ENCODE measurements at regions of chr4 and their contacts with region 1.

Region 1: GRCh38 chr4:112031712-112032328 is 113.4 kb upstream of the FAM241A start:
- DNase-seq: no peak
- H3K4me3 ChIP-seq: no peak overlapping the region
- H3K27ac ChIP-seq: no peak overlapping the region
- H3K4me1 ChIP-seq: peaks cover 0 to 26% (median 6%) of the 10 kb centered on the region in 3 donors
- H3K27me3 ChIP-seq: peaks cover 0 to 11% (median 0%) of the 10 kb centered on the region in 4 donors
- CTCF ChIP-seq: peak; percentile 43 to 86 (median 59)
- POLR2A ChIP-seq: no peak

Region 2: DNA sequence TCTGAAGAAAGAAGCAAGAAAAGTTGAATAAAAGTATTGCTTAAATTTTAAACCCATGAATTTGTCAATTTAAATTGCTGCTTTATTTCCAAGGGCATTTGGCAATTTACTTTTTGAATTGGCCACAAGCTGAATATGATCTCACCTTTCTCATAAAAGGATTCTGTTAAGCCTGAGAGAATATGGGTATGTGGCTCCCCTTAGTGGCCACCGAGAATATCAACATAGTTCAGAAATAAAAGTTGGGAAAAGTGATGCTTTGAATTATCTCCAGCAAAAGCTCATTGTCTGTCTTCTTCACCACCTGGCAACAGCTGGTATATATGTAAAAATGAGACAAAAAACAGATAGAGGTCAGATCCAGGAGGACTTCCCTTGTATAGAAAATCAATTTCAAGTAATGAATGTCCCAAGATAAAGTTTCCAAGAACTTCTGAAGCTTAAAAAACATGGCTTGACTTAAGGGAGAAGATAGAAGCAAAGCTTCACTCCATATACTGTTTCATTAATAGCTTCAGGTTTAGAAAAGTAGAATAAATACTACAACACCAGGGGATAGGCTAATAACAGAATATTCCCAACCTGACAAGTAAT is 177.2 kb before region 1 on chr4:
- intact Hi-C with region 1: no loop called
- DNase-seq: no peak
- H3K4me3 ChIP-seq: no peak overlapping the region
- H3K27ac ChIP-seq: no peak overlapping the region
- H3K4me1 ChIP-seq: no peaks in the 10 kb centered on the region
- H3K27me3 ChIP-seq: no peaks in the 10 kb centered on the region
- CTCF ChIP-seq: peak in 5 of 6 experiments; percentile 21 to 71 (median 46)
- POLR2A ChIP-seq: no peak

Region 3: GRCh38 chr4:111943795-111944203 is 88.0 kb before region 1 on chr4:
- intact Hi-C with region 1: loop called (anchors 10 kb)
- DNase-seq: peak; percentile 3
- H3K4me3 ChIP-seq: no peak overlapping the region
- H3K27ac ChIP-seq: no peak overlapping the region
- H3K4me1 ChIP-seq: peaks cover 0 to 5% (median 0%) of the 10 kb centered on the region in 3 donors
- H3K27me3 ChIP-seq: no peaks in the 10 kb centered on the region
- CTCF ChIP-seq: peak in 5 of 6 experiments; percentile 54 to 86 (median 65)
- POLR2A ChIP-seq: no peak

Measured in esophagus squamous epithelium (tissue), 5 donors.